Cardiac septum (tissue), 1 donor: ENCODE measurements at regions of chr17 and their contacts with region 1.

Region 1: GRCh38 chr17:39244600-39245570 is 19.1 kb upstream of the STAC2 start:
- DNase-seq: peak; percentile 86

Region 2: GRCh38 chr17:39209317-39210092 is 35.4 kb before region 1 on chr17:
- intact Hi-C with region 1: loop called (anchors 5 kb)
- DNase-seq: peak; percentile 84